ENCODE measurements at regions of chr9 and their contacts with region 1.

Region 1: DNA sequence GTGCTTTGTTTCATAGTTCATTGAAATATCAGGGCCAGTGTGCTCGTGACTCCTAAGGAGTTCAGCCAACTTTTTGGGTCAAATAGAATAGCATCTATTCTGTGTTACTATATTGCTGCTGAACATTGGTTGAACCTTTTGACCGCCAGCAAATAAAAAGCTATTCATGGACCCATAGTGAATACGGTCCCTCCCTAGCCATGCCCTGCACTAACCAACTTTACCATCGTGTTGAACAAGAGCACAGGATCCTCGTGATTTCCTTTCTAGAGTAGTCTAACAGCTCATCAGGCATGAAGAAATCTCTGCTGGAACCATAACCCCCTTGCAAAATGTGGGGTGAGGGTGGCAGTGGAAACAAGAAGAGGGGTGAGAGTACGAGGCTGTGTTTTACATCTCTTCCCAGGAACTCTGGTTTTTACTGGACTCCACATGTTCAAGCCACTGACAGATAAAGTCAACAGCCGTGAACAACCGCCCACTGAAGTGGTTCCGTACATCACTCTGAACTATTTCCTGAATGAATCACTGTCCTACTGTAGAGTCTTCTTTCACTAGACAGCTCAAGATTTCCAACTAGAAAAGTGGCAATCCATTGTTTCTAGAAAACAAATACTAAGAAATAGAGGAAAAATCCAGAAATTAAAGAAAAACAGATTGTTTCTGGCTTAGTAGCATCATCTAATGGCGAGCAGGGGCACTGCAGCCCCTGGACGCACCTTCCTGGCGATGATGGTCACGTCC is 70.1 kb upstream of the SPATA31E1 start:
- DNase-seq: peak; percentile 32 to 47 (median 38)
- H3K4me3 ChIP-seq: no peak overlapping the region
- H3K4me3 Mint-ChIP-seq: peak overlapping the region; percentile 11 to 71
- H3K27ac ChIP-seq: no peak overlapping the region
- H3K27ac Mint-ChIP-seq: peak overlapping the region in 4 of 7 donors; percentile 4 to 89 (median 18)
- H3K4me1 ChIP-seq: peaks cover 6 to 18% of the 10 kb centered on the region in 2 donors
- H3K4me1 Mint-ChIP-seq: peaks cover 30% of the 10 kb centered on the region
- H3K27me3 ChIP-seq: peaks cover 4 to 10% of the 10 kb centered on the region in 2 donors
- H3K27me3 Mint-ChIP-seq: peaks cover 10 to 22% (median 11%) of the 10 kb centered on the region in 3 donors
- CTCF ChIP-seq: peak; percentile 86

Region 2: DNA sequence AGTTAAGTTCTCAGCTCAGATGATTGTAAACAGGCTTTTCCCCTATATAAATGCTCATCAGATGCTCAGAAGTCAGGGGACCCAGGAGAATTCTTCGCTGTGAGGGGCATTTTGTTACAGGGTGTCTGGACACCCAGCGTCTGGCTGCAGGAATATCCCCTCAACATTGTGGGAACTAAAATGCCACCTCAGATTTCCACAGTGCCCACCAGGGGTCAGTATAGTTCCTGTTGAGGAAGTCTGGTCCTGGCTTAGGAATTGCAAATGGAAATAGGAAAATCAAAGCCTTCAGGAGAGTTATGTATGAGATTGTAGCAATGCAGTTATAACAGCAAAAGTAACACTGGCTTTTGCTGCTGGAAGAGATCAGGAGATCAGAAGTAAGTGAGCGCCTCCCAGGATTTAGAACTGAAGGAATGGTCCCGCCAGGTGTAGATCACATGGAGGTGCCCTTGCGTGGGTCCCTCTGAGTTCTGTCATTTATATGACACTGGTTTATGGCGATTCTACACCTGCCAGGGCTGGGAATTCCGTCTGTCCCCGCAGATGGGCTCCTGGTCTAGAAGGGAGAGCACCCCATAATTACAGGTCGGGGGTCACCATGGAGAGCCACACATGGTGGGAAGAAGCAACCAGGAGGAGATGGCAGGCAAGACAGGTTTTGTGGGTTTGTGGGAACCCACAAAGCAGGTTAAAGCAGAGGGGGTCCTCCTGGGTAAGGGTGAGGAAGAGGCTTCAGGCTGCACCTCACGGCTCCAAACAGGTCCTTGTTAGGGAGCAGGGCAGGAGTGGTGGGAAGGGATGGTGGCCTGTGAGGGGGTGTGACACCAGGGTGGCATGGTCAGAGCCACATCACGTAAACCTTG is 133.7 kb before region 1 on chr9:
- intact Hi-C with region 1: loop called (anchors 5 to 10 kb)
- DNase-seq: peak; percentile 27 to 62 (median 54)
- H3K4me3 ChIP-seq: no peak overlapping the region
- H3K4me3 Mint-ChIP-seq: no peak overlapping the region
- H3K27ac ChIP-seq: no peak overlapping the region
- H3K27ac Mint-ChIP-seq: peak overlapping the region in 1 of 7 donors; percentile 1
- H3K4me1 ChIP-seq: peaks cover 4 to 8% of the 10 kb centered on the region in 2 donors
- H3K4me1 Mint-ChIP-seq: peaks cover 12% of the 10 kb centered on the region
- H3K27me3 ChIP-seq: no peaks in the 10 kb centered on the region
- H3K27me3 Mint-ChIP-seq: peaks cover 0 to 6% (median 4%) of the 10 kb centered on the region in 3 donors
- CTCF ChIP-seq: peak; percentile 85

Region 3: DNA sequence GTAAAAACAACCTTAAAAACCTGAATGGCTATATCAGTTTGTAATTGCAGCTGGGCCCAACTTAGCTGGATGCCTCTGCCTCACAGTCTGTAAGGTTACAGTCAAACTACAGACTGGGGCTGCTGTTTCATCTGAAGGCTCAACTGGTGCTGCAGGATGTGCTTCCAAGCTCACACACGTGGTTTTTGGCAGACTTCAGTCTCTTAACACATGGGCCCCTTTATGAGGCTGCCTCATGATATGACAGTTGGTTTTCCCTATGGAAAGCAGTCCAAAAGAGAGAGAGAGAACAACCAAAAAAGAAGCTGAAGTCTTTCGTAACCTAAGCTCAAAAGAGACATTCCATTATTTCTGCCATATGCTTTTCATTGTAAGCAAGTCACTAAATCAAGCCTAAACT is 59.2 kb before region 1 on chr9:
- intact Hi-C with region 1: no loop called
- DNase-seq: no peak
- H3K4me3 ChIP-seq: no peak overlapping the region
- H3K4me3 Mint-ChIP-seq: no peak overlapping the region
- H3K27ac ChIP-seq: no peak overlapping the region
- H3K27ac Mint-ChIP-seq: no peak overlapping the region
- H3K4me1 ChIP-seq: no peaks in the 10 kb centered on the region
- H3K4me1 Mint-ChIP-seq: no peaks in the 10 kb centered on the region
- H3K27me3 ChIP-seq: peaks cover 0 to 3% of the 10 kb centered on the region in 2 donors
- H3K27me3 Mint-ChIP-seq: peaks cover 2 to 25% (median 15%) of the 10 kb centered on the region in 3 donors
- CTCF ChIP-seq: no peak

Region 4: GRCh38 chr9:87776481-87777379 is 35.8 kb before region 1 on chr9:
- intact Hi-C with region 1: no loop called
- DNase-seq: no peak
- H3K4me3 ChIP-seq: no peak overlapping the region
- H3K4me3 Mint-ChIP-seq: no peak overlapping the region
- H3K27ac ChIP-seq: no peak overlapping the region
- H3K27ac Mint-ChIP-seq: peak overlapping the region in 1 of 7 donors; percentile 25
- H3K4me1 ChIP-seq: no peaks in the 10 kb centered on the region
- H3K4me1 Mint-ChIP-seq: peaks cover 6% of the 10 kb centered on the region
- H3K27me3 ChIP-seq: peaks cover 6 to 10% of the 10 kb centered on the region in 2 donors
- H3K27me3 Mint-ChIP-seq: peaks cover 7 to 11% (median 8%) of the 10 kb centered on the region in 3 donors
- CTCF ChIP-seq: no peak

Region 5: GRCh38 chr9:87883990-87884389 is 71.4 kb after region 1 on chr9:
- intact Hi-C with region 1: no loop called
- DNase-seq: no peak
- H3K4me3 ChIP-seq: no peak overlapping the region
- H3K4me3 Mint-ChIP-seq: no peak overlapping the region
- H3K27ac ChIP-seq: no peak overlapping the region
- H3K27ac Mint-ChIP-seq: no peak overlapping the region
- H3K4me1 ChIP-seq: no peaks in the 10 kb centered on the region
- H3K4me1 Mint-ChIP-seq: no peaks in the 10 kb centered on the region
- H3K27me3 ChIP-seq: no peaks in the 10 kb centered on the region
- H3K27me3 Mint-ChIP-seq: peaks cover 3 to 11% (median 3%) of the 10 kb centered on the region in 3 donors
- CTCF ChIP-seq: no peak

Measured in CD14-positive monocyte (primary cell).